ENCODE measurements at regions of chr10 and their contacts with region 1.

Region 1: DNA sequence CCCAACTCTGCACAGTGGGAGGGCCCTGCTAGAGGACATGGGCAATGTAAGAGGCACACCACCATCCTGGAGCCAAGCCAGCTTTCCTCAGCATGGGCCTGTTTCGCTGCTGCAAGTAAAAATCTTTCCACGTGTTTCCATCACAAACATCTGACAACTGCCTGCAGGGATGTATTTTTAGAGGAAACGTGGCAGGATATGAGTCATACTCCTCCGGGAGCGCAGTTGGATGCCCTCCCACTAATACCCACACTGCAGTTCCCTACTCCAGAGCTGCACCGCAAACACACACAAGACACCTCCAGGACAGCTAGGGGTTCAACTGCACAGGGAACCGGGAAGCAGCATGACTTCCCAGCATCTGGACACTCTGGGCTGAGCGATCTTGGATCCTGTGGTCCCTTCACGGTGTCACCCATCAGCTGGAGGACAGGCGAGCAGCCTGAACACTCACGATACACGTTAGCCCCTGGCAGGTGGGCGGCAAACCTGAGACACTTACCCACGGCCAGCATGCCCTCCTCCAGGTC is 26.1 kb downstream of the PLAC9 start:
- DNase-seq: peak; percentile 88
- H3K4me3 ChIP-seq: peak overlapping the region; percentile 14
- H3K27ac ChIP-seq: peak overlapping the region; percentile 90
- H3K4me1 ChIP-seq: peaks cover 74% of the 10 kb centered on the region
- H3K27me3 ChIP-seq: no peaks in the 10 kb centered on the region
- CTCF ChIP-seq: no peak

Region 2: DNA sequence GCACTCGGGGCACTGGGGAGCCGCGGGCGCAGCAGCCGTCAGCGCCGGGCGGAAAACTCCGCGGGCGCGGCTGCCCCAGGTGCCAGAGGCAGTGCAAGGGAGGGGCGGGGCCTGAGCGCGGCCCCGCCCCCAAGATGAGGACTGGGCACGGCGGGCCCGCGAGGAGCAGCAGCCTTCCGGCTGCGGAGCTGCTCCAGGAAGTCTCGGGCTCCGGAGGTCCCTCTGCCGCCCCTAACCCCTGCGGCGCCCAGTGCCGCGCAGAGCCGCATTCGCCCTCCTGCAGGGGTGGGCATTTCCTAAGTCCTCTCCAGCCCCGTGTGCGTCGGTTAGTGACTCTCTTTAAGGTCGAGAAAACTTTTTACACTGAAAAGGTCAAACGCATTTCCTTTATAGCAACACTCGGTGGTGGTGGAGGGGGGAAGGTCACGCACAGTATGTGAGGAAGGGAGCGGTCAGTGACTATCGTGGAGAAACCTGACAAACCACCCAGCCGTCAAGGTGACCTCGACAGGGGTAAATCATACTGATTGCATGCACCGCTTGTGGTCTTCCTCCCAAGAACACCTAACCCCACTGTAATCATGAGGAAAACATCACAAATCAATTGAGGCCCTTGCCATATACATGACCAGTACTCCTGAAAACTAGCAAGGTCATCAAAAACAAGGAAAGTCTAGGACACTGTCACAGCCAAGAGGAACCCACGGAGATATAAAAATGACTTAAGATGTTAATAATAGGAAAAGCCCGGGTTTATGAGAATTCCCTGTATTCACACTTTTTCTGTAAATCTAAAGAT is 47.0 kb after region 1 on chr10 and contains the start of gene ANXA11:
- intact Hi-C with region 1: loop called (anchors 5 kb)
- DNase-seq: peak; percentile 86
- H3K4me3 ChIP-seq: peak within 1 kb of the TSS; percentile 90
- H3K27ac ChIP-seq: peak within 1 kb of the TSS; percentile 99
- H3K4me1 ChIP-seq: peaks cover 74% of the 10 kb centered on the region
- H3K27me3 ChIP-seq: no peaks in the 10 kb centered on the region
- CTCF ChIP-seq: no peak
- total RNA-seq, gene ANXA11: 390 TPM